CD4-positive, alpha-beta T cell (primary cell): ENCODE measurements at regions of chr16 and their contacts with region 1.

Region 1: GRCh38 chr16:3810198-3810664 is 70.3 kb downstream of the CREBBP start:
- DNase-seq: no peak
- ATAC-seq: no peak
- H3K4me3 ChIP-seq: no peak overlapping the region
- H3K4me3 Mint-ChIP-seq: peak overlapping the region; percentile 38
- H3K27ac ChIP-seq: no peak overlapping the region
- H3K27ac Mint-ChIP-seq: peak overlapping the region; percentile 55
- H3K4me1 ChIP-seq: peaks cover 81% of the 10 kb centered on the region
- H3K4me1 Mint-ChIP-seq: peaks cover 93% of the 10 kb centered on the region
- H3K27me3 ChIP-seq: no peaks in the 10 kb centered on the region
- H3K27me3 Mint-ChIP-seq: no peaks in the 10 kb centered on the region
- CTCF ChIP-seq: no peak

Region 2: DNA sequence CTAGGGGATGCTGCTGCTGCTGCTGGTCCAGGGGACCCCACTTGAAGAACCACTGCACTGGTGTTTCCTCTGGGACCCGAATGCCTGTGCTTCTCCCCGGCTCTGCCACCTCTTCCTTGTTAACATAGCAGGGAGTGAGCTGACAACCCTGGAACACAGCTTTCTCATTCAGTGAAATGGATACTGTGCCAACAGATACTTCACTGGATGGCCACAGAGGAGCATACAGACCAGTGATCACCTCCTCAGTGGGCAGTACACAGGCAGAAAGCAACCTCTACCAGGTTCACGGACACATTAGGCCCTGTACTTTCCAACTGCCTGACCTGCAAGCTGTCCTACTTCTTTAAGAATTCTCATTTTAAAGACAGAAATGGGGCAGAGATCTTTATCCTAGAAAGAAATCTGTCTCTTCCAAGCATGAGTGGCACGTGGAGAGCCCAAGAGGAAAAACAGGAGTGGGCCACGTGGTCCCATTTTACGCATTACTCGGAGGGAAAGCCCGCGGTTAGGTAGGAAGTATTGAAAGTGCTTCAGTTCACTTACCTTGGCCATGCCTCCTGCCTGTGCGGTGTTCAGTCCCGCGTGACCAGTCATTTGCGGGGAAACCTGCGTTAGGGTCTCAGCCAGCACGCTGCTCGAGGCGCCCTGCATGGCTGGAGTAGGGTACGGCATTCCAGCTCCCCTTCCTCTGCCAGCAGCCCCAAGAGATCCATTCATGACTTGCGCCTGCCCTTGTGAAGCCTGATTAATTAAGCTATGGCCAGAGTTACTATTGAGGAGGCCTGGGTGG is 39.7 kb after region 1 on chr16:
- CTCF ChIA-PET with region 1: no interaction called
- POLR2A ChIA-PET with region 1: no interaction called
- intact Hi-C with region 1: loop called in 1 of 2 experiments (anchors 5 kb)
- DNase-seq: no peak
- ATAC-seq: no peak
- H3K4me3 ChIP-seq: no peak overlapping the region
- H3K4me3 Mint-ChIP-seq: no peak overlapping the region
- H3K27ac ChIP-seq: no peak overlapping the region
- H3K27ac Mint-ChIP-seq: no peak overlapping the region
- H3K4me1 ChIP-seq: peaks cover 22% of the 10 kb centered on the region
- H3K4me1 Mint-ChIP-seq: peaks cover 60% of the 10 kb centered on the region
- H3K27me3 ChIP-seq: no peaks in the 10 kb centered on the region
- H3K27me3 Mint-ChIP-seq: no peaks in the 10 kb centered on the region
- CTCF ChIP-seq: no peak